Right ventricle myocardium superior (tissue), 1 donor: ENCODE measurements at regions of chr12 and their contacts with region 1.

Region 1: DNA sequence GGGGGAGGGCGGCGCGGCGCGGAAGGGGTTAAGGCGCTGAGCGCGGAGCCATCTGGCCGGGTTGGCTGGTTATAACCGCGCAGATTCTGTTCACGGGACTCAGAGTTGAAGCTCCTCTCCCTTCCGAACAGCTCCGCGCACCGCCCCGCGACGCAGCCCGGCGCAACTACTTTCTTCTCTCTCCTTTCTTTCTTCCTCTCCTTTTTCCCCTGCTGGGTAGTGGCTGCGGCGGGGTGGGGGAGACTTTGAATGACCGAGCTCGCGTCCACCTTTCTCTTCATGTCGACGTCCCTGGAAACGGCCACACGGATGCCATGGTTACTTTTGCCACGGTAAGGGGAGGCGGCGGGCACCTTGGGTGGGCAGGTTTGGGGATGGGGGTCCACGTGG is at the start of gene NTF3:
- DNase-seq: peak; percentile 58
- ATAC-seq: peak; percentile 64
- total RNA-seq, gene NTF3: 1.1 TPM

Region 2: GRCh38 chr12:5138845-5139244 is 293.2 kb before region 1 on chr12:
- intact Hi-C with region 1: no loop called
- DNase-seq: no peak
- ATAC-seq: no peak

Region 3: GRCh38 chr12:5466521-5466960 is 34.5 kb after region 1 on chr12:
- intact Hi-C with region 1: no loop called
- DNase-seq: no peak
- ATAC-seq: no peak

Region 4: GRCh38 chr12:5648692-5649359 is 216.8 kb after region 1 on chr12:
- intact Hi-C with region 1: loop called (anchors 10 kb)
- DNase-seq: no peak
- ATAC-seq: peak; percentile 71